Uterus (tissue), 4 donors: ENCODE measurements at regions of chr9 and their contacts with region 1.

Region 1: GRCh38 chr9:87324613-87325194 is 173.0 kb upstream of the DAPK1 start:
- DNase-seq: no peak
- H3K4me3 ChIP-seq: no peak overlapping the region
- H3K27ac ChIP-seq: peak overlapping the region; percentile 70 to 75
- H3K4me1 ChIP-seq: peaks cover 5% of the 10 kb centered on the region in 2 donors
- H3K27me3 ChIP-seq: no peaks in the 10 kb centered on the region
- CTCF ChIP-seq: peak; percentile 75 to 89 (median 86)
- POLR2A ChIP-seq: no peak

Region 2: GRCh38 chr9:86434039-86434726 is 890.5 kb before region 1 on chr9:
- intact Hi-C with region 1: loop called (anchors 10 kb)
- DNase-seq: peak; percentile 85
- H3K4me3 ChIP-seq: no peak overlapping the region
- H3K27ac ChIP-seq: peak overlapping the region; percentile 79 to 85
- H3K4me1 ChIP-seq: no peaks in the 10 kb centered on the region
- H3K27me3 ChIP-seq: no peaks in the 10 kb centered on the region
- CTCF ChIP-seq: peak; percentile 69 to 90 (median 73)
- POLR2A ChIP-seq: no peak

Region 3: GRCh38 chr9:86486891-86487837 is 837.5 kb before region 1 on chr9:
- intact Hi-C with region 1: loop called (anchors 10 kb)
- DNase-seq: no peak
- H3K4me3 ChIP-seq: no peak overlapping the region
- H3K27ac ChIP-seq: peak overlapping the region; percentile 69 to 71
- H3K4me1 ChIP-seq: no peaks in the 10 kb centered on the region
- H3K27me3 ChIP-seq: no peaks in the 10 kb centered on the region
- CTCF ChIP-seq: peak; percentile 63 to 80 (median 69)
- POLR2A ChIP-seq: no peak

Region 4: GRCh38 chr9:86948074-86948929 is 376.4 kb before region 1 on chr9:
- intact Hi-C with region 1: loop called (anchors 5 kb)
- DNase-seq: peak; percentile 83 to 87
- H3K4me3 ChIP-seq: peak overlapping the region; percentile 57 to 93
- H3K27ac ChIP-seq: peak overlapping the region; percentile 93 to 96
- H3K4me1 ChIP-seq: no peaks in the 10 kb centered on the region
- H3K27me3 ChIP-seq: no peaks in the 10 kb centered on the region
- CTCF ChIP-seq: peak; percentile 70 to 98 (median 87)
- POLR2A ChIP-seq: peak in 1 of 2 donors; percentile 45

Region 5: GRCh38 chr9:87127978-87128614 is 196.6 kb before region 1 on chr9:
- intact Hi-C with region 1: loop called (anchors 5 kb)
- DNase-seq: peak in 1 of 2 donors; percentile 68
- H3K4me3 ChIP-seq: no peak overlapping the region
- H3K27ac ChIP-seq: peak overlapping the region; percentile 44 to 61
- H3K4me1 ChIP-seq: peaks cover 0 to 24% of the 10 kb centered on the region in 2 donors
- H3K27me3 ChIP-seq: no peaks in the 10 kb centered on the region
- CTCF ChIP-seq: no peak
- POLR2A ChIP-seq: no peak

Region 6: GRCh38 chr9:89278997-89279739 is 1954.5 kb after region 1 on chr9:
- intact Hi-C with region 1: no loop called
- DNase-seq: peak in 1 of 2 donors; percentile 23
- H3K4me3 ChIP-seq: no peak overlapping the region
- H3K27ac ChIP-seq: no peak overlapping the region
- H3K4me1 ChIP-seq: peaks cover 0 to 6% of the 10 kb centered on the region in 2 donors
- H3K27me3 ChIP-seq: no peaks in the 10 kb centered on the region
- CTCF ChIP-seq: peak; percentile 56 to 71 (median 62)
- POLR2A ChIP-seq: no peak